Activated CD4-positive, alpha-beta T cell treated with anti-CD3 and anti-CD28 coated beads, Interleukin-2, amount 10 ng/mL, durations not matched to agents 24 days and 14 days (primary cell): ENCODE measurements at regions of chr17 and their contacts with region 1.

Region 1: DNA sequence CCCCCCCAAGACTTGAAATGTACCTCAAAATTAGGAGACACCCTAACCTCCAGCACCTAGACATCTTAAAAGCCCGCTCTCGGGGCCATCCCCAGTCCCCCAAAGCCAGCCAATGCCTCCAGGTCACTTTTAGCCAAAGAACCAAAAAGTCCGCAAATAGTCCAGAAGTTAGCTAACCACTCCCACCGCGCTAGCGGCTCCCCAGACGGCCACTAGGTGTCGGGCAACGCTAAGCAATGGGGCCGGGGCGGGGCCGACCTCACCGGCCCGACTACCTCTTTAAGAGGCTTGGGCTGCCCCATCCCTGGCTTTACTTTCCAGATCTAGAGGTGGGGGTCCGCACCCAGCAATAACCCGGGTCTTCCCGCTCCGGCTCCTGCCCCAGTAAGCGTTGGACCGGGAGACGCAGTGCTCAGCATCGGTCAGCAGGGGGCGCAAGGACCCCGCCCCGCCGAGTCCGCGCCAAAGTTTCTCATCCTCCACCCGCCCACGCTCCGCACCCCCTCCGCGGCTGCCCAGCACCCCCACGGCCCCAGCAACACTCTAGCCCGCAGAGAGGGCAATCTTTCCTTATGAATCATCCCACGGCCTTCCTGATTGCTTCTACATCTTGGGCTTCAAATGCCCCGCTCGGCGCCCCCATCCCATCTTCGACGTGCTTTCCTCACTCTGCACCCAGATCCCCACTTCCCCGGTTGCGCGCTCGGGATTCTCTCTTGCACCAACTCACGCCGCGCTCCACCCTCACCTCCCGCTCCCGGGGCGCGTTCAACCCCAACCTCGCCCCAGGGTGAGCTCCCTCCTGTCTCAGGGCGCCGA is 765 bp downstream of the COL1A1 start:
- DNase-seq: peak; percentile 95
- H3K4me3 Mint-ChIP-seq: peak overlapping the region; percentile 80
- H3K27ac Mint-ChIP-seq: peak overlapping the region; percentile 4
- H3K4me1 Mint-ChIP-seq: peaks cover 13% of the 10 kb centered on the region
- H3K27me3 Mint-ChIP-seq: peaks cover 58% of the 10 kb centered on the region

Region 2: DNA sequence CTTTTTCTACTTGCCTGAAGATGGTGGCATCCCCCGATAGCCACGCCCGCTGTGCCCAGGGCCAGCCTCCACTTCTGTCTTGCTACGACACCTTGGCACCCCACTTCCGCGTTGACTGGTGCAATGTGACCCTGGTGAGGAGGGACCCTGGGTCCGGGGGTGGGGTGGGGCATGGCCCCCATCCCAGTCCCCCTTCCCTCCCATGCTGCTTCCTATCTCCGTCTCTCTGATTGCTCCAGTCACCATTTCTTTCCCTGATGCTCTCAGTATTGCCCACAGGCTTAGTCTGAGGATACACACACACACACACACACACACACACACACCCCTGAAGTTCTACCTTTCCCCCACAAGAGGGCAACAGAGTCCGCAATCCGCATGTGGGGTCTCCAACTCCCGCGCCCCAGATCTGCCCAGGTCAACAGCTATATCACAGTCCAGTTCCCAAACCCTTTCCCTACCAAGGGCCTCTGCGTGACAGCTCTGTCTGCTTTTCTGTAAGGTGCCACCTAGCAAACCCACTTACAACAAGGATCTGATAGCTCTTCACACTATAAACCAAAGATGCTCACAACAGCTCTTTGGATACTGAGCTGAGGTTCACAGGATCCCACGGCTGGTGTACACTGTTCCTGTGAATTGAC is 31.4 kb before region 1 on chr17:
- intact Hi-C with region 1: loop called (anchors 1 kb)
- DNase-seq: peak; percentile 89
- H3K4me3 Mint-ChIP-seq: peak overlapping the region; percentile 34
- H3K27ac Mint-ChIP-seq: peak overlapping the region; percentile 65
- H3K4me1 Mint-ChIP-seq: peaks cover 12% of the 10 kb centered on the region
- H3K27me3 Mint-ChIP-seq: peaks cover 3% of the 10 kb centered on the region

Region 3: GRCh38 chr17:50177983-50178834 is 22.5 kb before region 1 on chr17:
- intact Hi-C with region 1: loop called (anchors 2 kb)
- DNase-seq: peak; percentile 77
- H3K4me3 Mint-ChIP-seq: peak overlapping the region; percentile 33
- H3K27ac Mint-ChIP-seq: peak overlapping the region; percentile 77
- H3K4me1 Mint-ChIP-seq: peaks cover 11% of the 10 kb centered on the region
- H3K27me3 Mint-ChIP-seq: peaks cover 5% of the 10 kb centered on the region

Region 4: GRCh38 chr17:50244771-50245170 is 44.1 kb after region 1 on chr17:
- intact Hi-C with region 1: no loop called
- DNase-seq: no peak
- H3K4me3 Mint-ChIP-seq: no peak overlapping the region
- H3K27ac Mint-ChIP-seq: no peak overlapping the region
- H3K4me1 Mint-ChIP-seq: no peaks in the 10 kb centered on the region
- H3K27me3 Mint-ChIP-seq: peaks cover 34% of the 10 kb centered on the region

Region 5: DNA sequence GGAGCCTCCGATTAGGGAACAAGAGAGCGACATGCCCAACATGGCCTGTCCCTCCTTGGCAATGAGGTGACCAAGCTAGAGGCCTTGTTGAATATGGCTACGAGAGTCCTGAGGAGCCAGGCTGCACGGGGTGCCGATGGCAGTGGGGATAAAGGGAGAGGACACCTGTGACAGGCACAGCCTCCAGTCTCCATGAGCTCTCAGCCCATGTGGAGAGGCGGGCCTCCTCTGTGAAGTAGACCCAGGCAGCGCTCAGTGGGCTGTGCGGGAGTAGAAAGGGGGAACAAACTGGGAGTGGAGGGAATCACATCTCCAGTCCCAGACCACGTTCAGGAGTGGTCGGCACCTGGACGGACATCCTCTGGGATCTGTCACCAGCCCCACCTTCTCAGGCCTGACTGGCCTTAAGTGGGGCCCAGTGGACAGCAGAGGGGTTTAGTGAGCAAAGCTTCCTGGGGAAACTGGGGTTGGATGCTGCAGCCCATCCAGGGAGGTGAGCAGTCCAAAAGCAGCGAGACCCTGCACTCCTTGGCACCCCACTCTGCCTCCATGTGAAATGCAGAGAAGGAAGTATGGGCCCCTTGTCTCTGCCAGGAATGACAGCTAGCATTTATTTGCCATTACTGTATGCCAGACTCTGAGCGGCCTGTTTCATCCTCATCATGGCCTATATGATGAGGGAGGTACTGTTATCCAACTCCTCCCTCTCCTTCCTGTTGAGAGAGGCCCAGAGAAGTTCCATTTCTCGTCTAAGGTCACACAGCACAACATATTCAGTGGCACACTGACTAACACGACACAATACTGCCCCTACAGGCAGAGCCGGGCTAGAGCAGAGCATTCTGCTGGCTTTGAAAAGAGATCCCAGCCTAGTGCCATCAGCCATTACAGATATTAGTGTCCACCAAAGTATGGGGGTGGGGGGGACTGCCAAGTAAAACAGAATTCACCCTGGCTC is 69.1 kb after region 1 on chr17:
- intact Hi-C with region 1: loop called (anchors 1 kb)
- DNase-seq: peak; percentile 91
- H3K4me3 Mint-ChIP-seq: no peak overlapping the region
- H3K27ac Mint-ChIP-seq: no peak overlapping the region
- H3K4me1 Mint-ChIP-seq: peaks cover 17% of the 10 kb centered on the region
- H3K27me3 Mint-ChIP-seq: peaks cover 10% of the 10 kb centered on the region

Region 6: DNA sequence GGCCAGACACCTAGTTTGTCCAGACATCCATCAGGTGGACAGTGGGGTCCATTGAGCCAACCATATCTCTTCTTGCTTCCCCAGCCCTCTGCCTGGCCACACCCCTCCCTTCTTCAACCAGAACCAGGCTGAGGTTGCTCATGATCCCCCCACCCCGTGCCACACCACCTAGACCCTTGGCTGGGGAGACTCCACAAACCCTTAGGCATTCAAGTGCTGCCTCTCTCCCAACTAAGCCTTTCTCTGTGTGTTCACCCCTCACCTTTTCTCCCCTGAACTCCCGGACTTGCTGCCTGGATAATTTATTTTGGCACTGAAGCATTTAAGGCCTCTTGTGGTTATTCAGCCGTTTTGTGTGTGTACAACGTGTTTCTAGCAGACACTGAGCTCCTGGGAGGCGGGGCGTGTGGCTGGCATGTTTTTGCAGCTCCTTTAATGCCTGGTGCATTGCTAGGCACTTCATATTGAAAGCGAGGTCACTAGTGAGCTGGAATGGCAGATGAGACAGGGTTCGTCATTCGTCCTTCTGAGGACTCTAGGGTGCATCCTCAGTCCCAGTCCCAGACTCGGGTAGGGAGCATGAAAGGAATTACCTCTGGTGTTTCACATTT is 388.5 kb after region 1 on chr17:
- intact Hi-C with region 1: no loop called
- DNase-seq: no peak
- H3K4me3 Mint-ChIP-seq: no peak overlapping the region
- H3K27ac Mint-ChIP-seq: no peak overlapping the region
- H3K4me1 Mint-ChIP-seq: no peaks in the 10 kb centered on the region
- H3K27me3 Mint-ChIP-seq: peaks cover 7% of the 10 kb centered on the region